ENCODE measurements at regions of chr7 and their contacts with region 1.

Region 1: DNA sequence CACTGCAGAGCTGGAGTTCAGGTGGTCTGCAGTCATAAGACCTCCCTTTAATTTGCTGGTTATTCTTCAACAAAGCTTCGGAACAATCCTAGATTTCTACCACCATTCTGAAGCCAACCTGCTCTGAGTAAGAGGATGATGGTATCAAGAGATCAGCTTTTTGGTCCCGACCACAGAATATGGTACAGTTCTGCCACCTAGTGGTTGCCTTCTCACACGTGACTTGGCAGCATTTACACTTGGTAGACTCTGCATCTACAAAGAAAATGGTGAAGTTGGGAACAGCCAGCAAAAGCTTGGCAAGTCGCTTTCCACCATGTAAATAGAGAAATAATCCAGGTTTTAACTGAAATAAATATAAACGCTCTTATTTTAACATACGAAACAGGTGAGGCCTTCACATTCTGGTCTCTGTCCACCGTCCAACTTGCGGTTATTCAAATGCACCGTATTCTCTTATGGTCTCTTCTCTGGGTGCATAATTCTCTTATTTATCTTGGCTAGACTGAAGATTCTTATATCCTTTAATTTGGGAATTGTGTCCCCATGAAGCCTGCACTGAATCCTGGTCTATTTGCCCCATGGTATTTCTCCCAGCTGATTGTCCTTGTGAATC is 173.9 kb upstream of the GRM3 start:
- DNase-seq: peak; percentile 57
- H3K4me3 ChIP-seq: no peak overlapping the region
- H3K27ac ChIP-seq: no peak overlapping the region
- H3K4me1 ChIP-seq: no peaks in the 10 kb centered on the region; a peak in 1 of 4 replicates
- H3K27me3 ChIP-seq: no peaks in the 10 kb centered on the region
- CTCF ChIP-seq: peak; percentile 97
- EP300 ChIP-seq: no peak
- RAD21 ChIP-seq: peak; percentile 95

Region 2: GRCh38 chr7:85890244-85890811 is 579.5 kb before region 1 on chr7:
- CTCF ChIA-PET with region 1: interaction called, 107 read pairs
- POLR2A ChIA-PET with region 1: no interaction called
- DNase-seq: peak; percentile 48
- H3K4me3 ChIP-seq: no peak overlapping the region
- H3K27ac ChIP-seq: no peak overlapping the region
- H3K4me1 ChIP-seq: no peaks in the 10 kb centered on the region
- H3K27me3 ChIP-seq: no peaks in the 10 kb centered on the region
- CTCF ChIP-seq: peak; percentile 88
- EP300 ChIP-seq: no peak
- RAD21 ChIP-seq: peak; percentile 86

Region 3: GRCh38 chr7:86448856-86449255 is 20.9 kb before region 1 on chr7:
- CTCF ChIA-PET with region 1: interaction called, 28 read pairs
- POLR2A ChIA-PET with region 1: interaction called, 3 read pairs
- DNase-seq: no peak
- H3K4me3 ChIP-seq: no peak overlapping the region
- H3K27ac ChIP-seq: no peak overlapping the region
- H3K4me1 ChIP-seq: no peaks in the 10 kb centered on the region
- H3K27me3 ChIP-seq: no peaks in the 10 kb centered on the region
- CTCF ChIP-seq: no peak
- EP300 ChIP-seq: no peak
- RAD21 ChIP-seq: no peak

Region 4: GRCh38 chr7:86485827-86486226 is 16.0 kb after region 1 on chr7:
- CTCF ChIA-PET with region 1: interaction called, 37 read pairs
- POLR2A ChIA-PET with region 1: no interaction called
- DNase-seq: no peak
- H3K4me3 ChIP-seq: no peak overlapping the region
- H3K27ac ChIP-seq: no peak overlapping the region
- H3K4me1 ChIP-seq: no peaks in the 10 kb centered on the region
- H3K27me3 ChIP-seq: no peaks in the 10 kb centered on the region
- CTCF ChIP-seq: no peak
- EP300 ChIP-seq: no peak
- RAD21 ChIP-seq: no peak

Region 5: GRCh38 chr7:86963599-86964230 is 493.9 kb after region 1 on chr7:
- CTCF ChIA-PET with region 1: no interaction called
- POLR2A ChIA-PET with region 1: no interaction called
- DNase-seq: no peak
- H3K4me3 ChIP-seq: peak overlapping the region; percentile 15 to 19; a peak in 2 of 4 replicates
- H3K27ac ChIP-seq: peak overlapping the region; percentile 41 to 62; a peak in 3 of 4 replicates
- H3K4me1 ChIP-seq: peaks cover 25 to 30% of the 10 kb centered on the region in 2 experiments; a peak in 3 of 4 replicates
- H3K27me3 ChIP-seq: no peaks in the 10 kb centered on the region
- CTCF ChIP-seq: no peak
- EP300 ChIP-seq: no peak
- RAD21 ChIP-seq: no peak